CD4-positive, alpha-beta T cell (primary cell): ENCODE measurements at regions of chr10 and their contacts with region 1.

Region 1: GRCh38 chr10:110857265-110858158 is 14.2 kb upstream of the PDCD4 start:
- DNase-seq: peak in 5 of 14 experiments; percentile 32 to 74 (median 58)
- ATAC-seq: peak; percentile 43
- H3K4me3 ChIP-seq: no peak overlapping the region
- H3K4me3 Mint-ChIP-seq: peak overlapping the region; percentile 49
- H3K27ac ChIP-seq: peak overlapping the region; percentile 77 to 88
- H3K27ac Mint-ChIP-seq: peak overlapping the region; percentile 96
- H3K4me1 ChIP-seq: peaks cover 80% of the 10 kb centered on the region
- H3K4me1 Mint-ChIP-seq: peaks cover 89% of the 10 kb centered on the region
- H3K27me3 ChIP-seq: no peaks in the 10 kb centered on the region
- H3K27me3 Mint-ChIP-seq: no peaks in the 10 kb centered on the region
- CTCF ChIP-seq: no peak

Region 2: DNA sequence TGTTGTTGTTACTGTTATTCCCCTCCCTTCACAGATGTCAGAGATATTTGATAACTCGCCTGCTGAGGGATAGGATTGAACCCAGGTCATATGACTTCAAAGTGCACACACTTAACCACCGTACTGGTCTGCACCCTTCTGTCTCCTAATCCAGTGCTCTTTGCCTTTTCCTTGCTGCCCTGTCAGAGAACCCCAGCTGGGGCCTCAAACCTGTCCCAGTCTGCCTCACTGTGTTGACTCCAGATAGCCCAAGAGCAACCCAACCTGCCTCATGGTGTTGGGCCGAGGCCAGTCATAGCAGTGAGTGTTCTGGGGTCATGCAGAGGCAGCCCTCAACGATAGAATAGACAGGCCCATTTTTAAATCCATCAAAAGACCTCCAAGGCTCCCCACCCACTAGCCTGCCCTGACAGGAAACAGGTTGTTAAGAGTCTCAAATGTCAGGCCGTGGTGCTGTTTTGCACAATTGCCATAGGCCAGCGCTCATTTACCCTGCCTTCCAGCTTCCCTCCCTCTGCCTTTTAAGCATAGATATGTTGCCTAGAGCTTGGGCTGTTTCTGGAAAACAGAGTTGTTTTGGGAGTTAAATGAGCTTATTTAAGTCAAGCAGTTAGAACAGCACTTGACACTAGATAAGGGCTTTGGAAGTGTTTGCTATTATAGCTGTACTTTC is 22.7 kb before region 1 on chr10:
- CTCF ChIA-PET with region 1: interaction called, 3 read pairs
- POLR2A ChIA-PET with region 1: interaction called, 23 read pairs
- intact Hi-C with region 1: no loop called
- DNase-seq: peak in 12 of 14 experiments; percentile 10 to 65 (median 34)
- ATAC-seq: peak; percentile 96
- H3K4me3 ChIP-seq: no peak overlapping the region
- H3K4me3 Mint-ChIP-seq: peak overlapping the region; percentile 3
- H3K27ac ChIP-seq: no peak overlapping the region
- H3K27ac Mint-ChIP-seq: peak overlapping the region; percentile 89
- H3K4me1 ChIP-seq: peaks cover 43% of the 10 kb centered on the region
- H3K4me1 Mint-ChIP-seq: peaks cover 55% of the 10 kb centered on the region
- H3K27me3 ChIP-seq: no peaks in the 10 kb centered on the region
- H3K27me3 Mint-ChIP-seq: no peaks in the 10 kb centered on the region
- CTCF ChIP-seq: no peak

Region 3: GRCh38 chr10:110883924-110884323 is 26.4 kb after region 1 on chr10:
- CTCF ChIA-PET with region 1: interaction called, 3 read pairs
- POLR2A ChIA-PET with region 1: interaction called, 11 read pairs
- intact Hi-C with region 1: no loop called
- DNase-seq: peak in 1 of 14 experiments; percentile 36
- ATAC-seq: no peak
- H3K4me3 ChIP-seq: peak overlapping the region; percentile 13
- H3K4me3 Mint-ChIP-seq: peak overlapping the region; percentile 71
- H3K27ac ChIP-seq: peak overlapping the region in 1 of 2 donors; percentile 33
- H3K27ac Mint-ChIP-seq: peak overlapping the region; percentile 71
- H3K4me1 ChIP-seq: peaks cover 15% of the 10 kb centered on the region
- H3K4me1 Mint-ChIP-seq: peaks cover 83% of the 10 kb centered on the region
- H3K27me3 ChIP-seq: no peaks in the 10 kb centered on the region
- H3K27me3 Mint-ChIP-seq: no peaks in the 10 kb centered on the region
- CTCF ChIP-seq: no peak